ENCODE measurements at regions of chr4 and their contacts with region 1.

Region 1: DNA sequence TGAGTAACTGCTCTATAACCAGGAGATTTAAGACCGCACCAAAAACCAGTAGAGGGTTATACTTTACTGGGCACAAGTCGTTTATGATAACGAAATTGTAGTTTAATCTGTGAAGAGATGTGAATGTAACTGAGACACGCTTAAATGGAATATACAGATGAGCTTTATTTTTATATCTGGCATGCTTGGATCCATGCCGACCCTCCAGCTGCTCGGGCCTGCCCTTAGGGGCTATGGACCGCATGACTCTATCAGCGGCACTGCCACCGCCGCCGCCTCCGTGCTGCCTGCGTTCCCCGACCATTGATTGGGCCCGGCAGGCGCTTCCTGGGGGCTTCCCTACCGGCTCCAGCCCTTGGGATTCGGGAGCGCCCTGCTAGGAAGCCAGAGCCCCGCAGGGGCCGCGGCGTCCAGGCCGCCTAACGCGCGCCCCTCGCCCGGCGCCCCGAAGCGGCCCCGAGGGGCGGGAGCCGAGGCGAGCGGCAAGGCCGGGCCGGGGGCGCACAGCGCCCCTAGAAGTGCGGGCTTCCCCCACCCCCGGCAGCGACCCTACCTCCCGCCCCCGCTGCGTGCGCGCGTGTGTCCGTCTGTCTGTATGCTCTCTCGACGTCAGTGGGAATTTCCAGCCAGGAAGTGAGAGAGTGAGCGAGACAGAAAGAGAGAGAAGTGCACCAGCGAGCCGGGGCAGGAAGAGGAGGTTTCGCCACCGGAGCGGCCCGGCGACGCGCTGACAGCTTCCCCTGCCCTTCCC is at the start of gene NFKB1:
- DNase-seq: peak; percentile 77 to 84 (median 79)
- ATAC-seq: peak; percentile 20 to 77 (median 62)
- H3K4me3 ChIP-seq: peak within 1 kb of the TSS; percentile 70 to 98 (median 86)
- H3K27ac ChIP-seq: peak within 1 kb of the TSS; percentile 95 to 99 (median 98)
- H3K4me1 ChIP-seq: peaks cover 15 to 45% (median 36%) of the 10 kb centered on the region in 12 donors
- H3K27me3 ChIP-seq: no peaks in the 10 kb centered on the region
- CTCF ChIP-seq: no peak
- POLR2A ChIP-seq: no peak
- total RNA-seq, gene NFKB1: 15.9 to 34.1 (median 19.9) TPM

Region 2: GRCh38 chr4:102344954-102345794 is 155.7 kb before region 1 on chr4 and contains the start of gene SLC39A8:
- intact Hi-C with region 1: loop called in 1 of 10 experiments (anchors 10 kb)
- DNase-seq: peak; percentile 81 to 92 (median 85)
- ATAC-seq: peak; percentile 86 to 97 (median 96)
- H3K4me3 ChIP-seq: peak within 1 kb of the TSS; percentile 42 to 82 (median 58)
- H3K27ac ChIP-seq: peak within 1 kb of the TSS in 11 of 12 donors; percentile 7 to 92 (median 58)
- H3K4me1 ChIP-seq: peaks cover 0 to 49% (median 7%) of the 10 kb centered on the region in 12 donors
- H3K27me3 ChIP-seq: no peaks in the 10 kb centered on the region
- CTCF ChIP-seq: peak; percentile 47 to 86 (median 78)
- POLR2A ChIP-seq: peak in 1 of 2 donors; percentile 46
- total RNA-seq, gene SLC39A8: 1.9 to 51.3 (median 3.0) TPM

Region 3: DNA sequence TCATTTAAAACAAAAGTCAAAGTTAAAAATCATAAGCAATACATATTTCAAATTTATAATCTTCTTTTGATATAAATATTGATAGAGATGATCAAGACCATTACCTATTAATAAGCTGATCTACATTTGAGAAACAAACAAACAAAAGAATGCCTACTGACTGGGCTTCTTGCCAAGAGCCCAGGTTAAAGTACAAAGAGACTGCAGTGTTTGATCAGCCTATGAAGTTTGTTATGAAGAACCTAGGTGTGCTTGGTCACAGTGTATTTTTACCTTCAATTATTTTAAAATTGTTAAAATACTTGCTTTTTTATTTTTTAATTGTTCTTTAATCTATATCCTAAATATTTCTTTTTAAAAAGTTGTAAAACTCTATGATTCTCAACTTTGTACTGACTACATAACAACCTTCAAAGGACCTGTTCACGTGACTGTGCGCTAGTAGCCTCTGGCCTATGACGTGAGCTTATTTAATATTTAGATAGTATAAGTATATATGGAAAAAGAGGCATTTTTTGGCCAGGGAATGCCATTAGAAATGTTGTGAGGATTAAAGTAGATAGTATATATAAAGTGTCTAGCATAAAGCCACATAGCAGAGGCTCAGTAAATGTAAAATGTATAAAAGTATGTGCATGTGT is 144.2 kb before region 1 on chr4:
- intact Hi-C with region 1: no loop called
- DNase-seq: no peak
- ATAC-seq: no peak
- H3K4me3 ChIP-seq: no peak overlapping the region
- H3K27ac ChIP-seq: no peak overlapping the region
- H3K4me1 ChIP-seq: no peaks in the 10 kb centered on the region
- H3K27me3 ChIP-seq: no peaks in the 10 kb centered on the region
- CTCF ChIP-seq: no peak
- POLR2A ChIP-seq: no peak

Region 4: DNA sequence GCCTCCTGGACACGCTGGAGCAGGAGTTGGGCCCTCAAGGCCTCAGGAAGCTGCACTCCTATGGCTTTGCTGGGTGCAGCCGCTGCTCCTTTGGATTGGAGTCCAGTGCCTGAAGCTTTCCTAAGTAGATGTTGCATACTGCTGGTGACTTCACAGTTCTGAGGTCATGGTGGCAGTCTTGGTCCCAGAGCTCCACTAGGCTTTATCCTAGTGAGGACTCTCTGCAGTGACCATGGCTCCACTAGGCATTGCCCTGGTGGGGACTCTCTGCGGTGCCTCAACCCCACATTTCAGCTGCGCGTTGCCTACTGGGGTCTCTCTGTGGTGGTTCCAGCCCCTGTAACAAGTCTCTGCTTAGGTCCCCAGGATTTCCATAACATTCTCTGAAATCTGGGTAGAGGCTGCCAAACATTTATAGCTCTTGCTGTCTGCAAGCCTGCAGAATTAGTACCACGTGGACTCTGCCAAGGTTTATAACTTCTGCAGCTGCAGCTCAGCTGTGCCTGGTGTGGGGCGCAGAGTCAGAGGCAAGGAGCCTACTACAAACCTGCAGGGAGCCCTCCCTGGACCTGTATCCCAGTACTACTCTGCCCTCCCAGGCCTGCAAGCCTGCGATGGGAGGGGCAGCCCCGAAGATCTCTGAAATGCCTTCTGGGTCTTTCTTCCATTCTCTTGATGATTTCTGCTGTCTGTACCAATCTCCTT is 45.7 kb before region 1 on chr4:
- intact Hi-C with region 1: loop called in 1 of 10 experiments (anchors 5 kb)
- DNase-seq: no peak
- ATAC-seq: no peak
- H3K4me3 ChIP-seq: no peak overlapping the region
- H3K27ac ChIP-seq: no peak overlapping the region
- H3K4me1 ChIP-seq: peaks cover 0 to 3% (median 0%) of the 10 kb centered on the region in 12 donors
- H3K27me3 ChIP-seq: no peaks in the 10 kb centered on the region
- CTCF ChIP-seq: no peak
- POLR2A ChIP-seq: no peak

Region 5: GRCh38 chr4:102598086-102598761 is 97.4 kb after region 1 on chr4:
- intact Hi-C with region 1: loop called in 2 of 10 experiments (anchors 5 to 10 kb)
- DNase-seq: no peak
- ATAC-seq: peak; percentile 53 to 79 (median 69)
- H3K4me3 ChIP-seq: no peak overlapping the region
- H3K27ac ChIP-seq: peak overlapping the region in 7 of 12 donors; percentile 5 to 55 (median 13)
- H3K4me1 ChIP-seq: peaks cover 0 to 15% (median 8%) of the 10 kb centered on the region in 12 donors
- H3K27me3 ChIP-seq: no peaks in the 10 kb centered on the region
- CTCF ChIP-seq: no peak
- POLR2A ChIP-seq: no peak

Region 6: GRCh38 chr4:102826890-102827673 is 326.2 kb after region 1 on chr4 and contains the start of gene UBE2D3:
- intact Hi-C with region 1: loop called in 2 of 10 experiments (anchors 2 to 10 kb)
- DNase-seq: peak; percentile 94 to 97 (median 95)
- ATAC-seq: peak; percentile 59 to 78 (median 74)
- H3K4me3 ChIP-seq: peak within 1 kb of the TSS; percentile 83 to 99 (median 91)
- H3K27ac ChIP-seq: peak within 1 kb of the TSS; percentile 100
- H3K4me1 ChIP-seq: peaks cover 0 to 46% (median 37%) of the 10 kb centered on the region in 12 donors
- H3K27me3 ChIP-seq: no peaks in the 10 kb centered on the region
- CTCF ChIP-seq: peak in 4 of 12 donors; percentile 16 to 32 (median 22)
- POLR2A ChIP-seq: peak in 1 of 2 donors; percentile 25
- total RNA-seq, gene UBE2D3: 216 to 381 (median 258) TPM

Region 7: DNA sequence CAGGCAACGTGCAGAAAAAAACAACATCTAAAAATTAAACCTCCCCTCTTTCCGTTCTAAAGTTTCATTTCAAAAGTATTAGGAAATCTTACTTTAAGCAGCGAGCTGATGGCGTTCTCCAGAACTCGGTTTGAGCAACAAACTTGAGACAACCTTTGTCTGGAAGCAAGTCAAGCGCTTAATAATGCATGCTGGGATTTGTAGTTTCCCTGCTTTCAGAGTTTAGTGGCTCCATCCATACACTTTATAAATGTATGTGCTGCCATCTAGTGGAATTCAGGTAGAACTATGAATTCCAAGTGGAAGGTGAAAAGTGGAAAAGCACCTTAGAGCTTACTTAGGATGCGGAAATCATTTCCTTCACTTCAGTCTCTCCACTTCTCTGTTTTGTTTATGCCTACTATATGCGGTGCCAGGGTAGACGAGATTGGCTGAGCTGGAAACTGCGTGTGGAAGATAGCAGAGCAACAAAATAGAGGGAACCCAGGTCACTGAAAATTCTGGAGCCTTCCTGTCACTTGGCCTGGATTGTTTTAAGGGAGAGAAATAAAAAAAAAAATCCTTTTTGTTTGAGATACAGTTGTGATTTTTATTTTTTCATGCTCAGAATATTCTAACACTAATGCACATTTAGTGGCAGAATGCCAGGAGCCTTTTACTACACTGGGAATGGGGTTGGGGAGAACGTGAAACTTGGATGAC is 599.0 kb after region 1 on chr4 and contains the start of gene BDH2:
- intact Hi-C with region 1: loop called in 1 of 10 experiments (anchors 5 kb)
- DNase-seq: peak in 3 of 5 donors; percentile 39 to 64 (median 58)
- ATAC-seq: peak; percentile 91 to 98 (median 96)
- H3K4me3 ChIP-seq: peak within 1 kb of the TSS; percentile 41 to 68 (median 56)
- H3K27ac ChIP-seq: peak within 1 kb of the TSS; percentile 31 to 77 (median 62)
- H3K4me1 ChIP-seq: peaks cover 0 to 32% (median 10%) of the 10 kb centered on the region in 12 donors
- H3K27me3 ChIP-seq: no peaks in the 10 kb centered on the region
- CTCF ChIP-seq: peak; percentile 66 to 84 (median 78)
- POLR2A ChIP-seq: no peak
- total RNA-seq, gene BDH2: 20.3 to 38.0 (median 25.8) TPM

Measured in heart left ventricle (tissue), 16 donors.